ENCODE measurements at regions of chr1 and their contacts with region 1.

Region 1: DNA sequence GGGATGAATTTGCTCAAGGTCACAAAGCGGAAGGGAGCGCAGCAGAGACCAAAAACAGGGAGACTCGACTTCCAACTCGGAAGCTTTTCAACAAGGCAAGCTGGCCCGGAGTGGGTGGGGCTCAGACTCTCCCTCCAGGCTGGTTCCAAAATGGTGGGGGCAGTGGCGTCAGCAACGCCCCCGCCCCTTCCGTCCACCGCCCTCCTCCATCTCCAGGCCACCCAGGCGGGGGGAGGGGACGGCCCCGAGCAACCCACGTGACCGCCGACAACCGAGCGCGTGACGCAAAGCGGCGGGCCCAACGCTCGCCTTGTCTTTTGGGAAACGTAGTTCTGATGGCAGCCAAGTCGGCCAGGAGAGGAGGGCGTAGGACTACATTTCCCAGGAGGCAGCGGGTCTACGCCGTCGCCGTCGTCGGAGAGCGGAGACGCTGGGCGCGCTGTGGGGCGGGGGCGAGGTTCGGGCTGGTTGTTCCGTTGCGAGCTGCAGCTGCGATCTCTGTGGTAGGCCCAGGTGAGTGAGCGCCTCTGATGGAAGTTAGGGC is at the start of gene THRAP3:
- DNase-seq: peak; percentile 96 to 100 (median 100)
- ATAC-seq: peak; percentile 92
- H3K4me3 ChIP-seq: peak within 1 kb of the TSS; percentile 69
- H3K4me3 Mint-ChIP-seq: peak within 1 kb of the TSS; percentile 96 to 99 (median 98)
- H3K27ac ChIP-seq: peak within 1 kb of the TSS; percentile 98
- H3K27ac Mint-ChIP-seq: peak within 1 kb of the TSS; percentile 96 to 100 (median 100)
- H3K4me1 ChIP-seq: peaks cover 27 to 29% of the 10 kb centered on the region in 2 donors
- H3K4me1 Mint-ChIP-seq: peaks cover 21 to 43% (median 35%) of the 10 kb centered on the region in 7 donors
- H3K27me3 ChIP-seq: no peaks in the 10 kb centered on the region
- H3K27me3 Mint-ChIP-seq: no peaks in the 10 kb centered on the region
- total RNA-seq, gene THRAP3: 62.1 to 138 (median 122) TPM

Region 2: DNA sequence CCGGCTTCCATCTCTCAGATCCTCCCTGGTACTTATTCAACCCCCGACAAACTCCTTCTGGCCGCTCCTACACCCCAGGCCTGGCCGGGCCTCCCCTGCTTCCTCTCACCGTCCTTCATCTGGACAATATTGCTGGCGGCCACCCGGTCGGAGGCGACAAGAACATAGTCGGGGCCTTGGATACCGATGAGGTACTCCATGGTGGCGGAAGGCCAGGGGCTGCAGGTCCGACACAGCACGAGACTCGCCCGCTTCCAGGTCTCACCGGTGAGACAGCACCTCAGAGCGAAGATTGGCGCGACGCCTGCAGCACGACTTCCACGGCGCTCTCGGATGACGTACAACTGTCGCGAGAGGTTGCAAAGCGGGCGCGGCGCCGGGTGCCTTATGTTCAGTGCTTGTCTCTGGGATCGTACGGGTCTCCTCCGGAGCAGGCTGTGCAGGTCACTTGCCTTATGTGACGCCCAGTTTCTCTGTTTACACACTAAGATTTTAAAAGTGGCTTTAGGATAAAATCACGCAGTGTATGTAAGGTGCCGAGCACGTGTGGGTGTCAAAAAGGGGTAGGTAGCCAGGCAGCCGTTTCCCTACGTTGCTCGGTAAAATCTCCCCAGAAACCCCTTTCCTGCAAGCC is 582.7 kb before region 1 on chr1 and contains the start of gene PSMB2:
- CTCF ChIA-PET with region 1: no interaction called
- POLR2A ChIA-PET with region 1: no interaction called
- intact Hi-C with region 1: no loop called
- DNase-seq: peak; percentile 89 to 96 (median 95)
- ATAC-seq: peak; percentile 97
- H3K4me3 ChIP-seq: peak within 1 kb of the TSS; percentile 89
- H3K4me3 Mint-ChIP-seq: peak within 1 kb of the TSS; percentile 97 to 100 (median 100)
- H3K27ac ChIP-seq: peak within 1 kb of the TSS; percentile 92
- H3K27ac Mint-ChIP-seq: peak within 1 kb of the TSS; percentile 98 to 100 (median 99)
- H3K4me1 ChIP-seq: peaks cover 18 to 19% of the 10 kb centered on the region in 2 donors
- H3K4me1 Mint-ChIP-seq: peaks cover 16 to 54% (median 42%) of the 10 kb centered on the region in 7 donors
- H3K27me3 ChIP-seq: no peaks in the 10 kb centered on the region
- H3K27me3 Mint-ChIP-seq: peaks cover 12 to 44% (median 30%) of the 10 kb centered on the region in 5 donors
- total RNA-seq, gene PSMB2: 20.4 to 93.5 (median 23.5) TPM

Region 3: DNA sequence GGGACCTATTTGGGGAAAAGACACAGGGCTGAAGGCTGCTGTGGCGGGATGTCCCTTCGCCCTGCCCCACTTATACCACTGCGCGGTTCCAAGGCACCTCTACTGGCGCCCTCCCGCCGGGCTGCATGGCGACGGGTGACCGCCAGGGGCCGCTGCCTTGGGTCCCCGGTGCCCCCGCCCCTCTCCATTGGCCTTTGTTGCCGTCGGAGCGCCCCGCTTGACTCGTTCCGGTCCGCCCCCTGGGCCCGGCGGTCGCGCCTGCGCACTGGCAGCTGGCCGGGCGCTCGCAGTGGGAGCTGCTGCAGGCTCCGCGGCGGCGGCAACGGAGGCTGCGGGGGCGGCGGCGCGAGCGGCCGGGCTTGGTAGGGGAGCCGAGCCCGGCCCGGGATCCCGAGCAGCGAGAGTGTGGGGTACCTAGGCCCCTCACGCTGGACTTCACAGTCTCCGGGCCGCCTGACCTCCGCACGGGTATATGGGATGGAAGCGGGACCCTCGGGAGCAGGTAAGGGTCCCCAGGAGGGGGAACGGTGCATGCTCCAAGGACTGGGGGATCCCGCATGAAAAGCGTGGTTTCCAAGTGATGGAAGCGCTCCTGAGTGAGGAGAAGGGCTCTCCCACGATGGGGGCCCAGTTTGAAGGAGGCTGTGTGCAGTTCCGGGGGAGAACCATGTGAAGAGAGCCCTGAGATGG is 341.0 kb before region 1 on chr1 and contains the start of gene AGO1:
- CTCF ChIA-PET with region 1: no interaction called
- POLR2A ChIA-PET with region 1: interaction called, 3 read pairs
- intact Hi-C with region 1: loop called in 1 of 2 experiments (anchors 1 kb)
- DNase-seq: peak; percentile 94 to 99 (median 97)
- ATAC-seq: peak; percentile 100
- H3K4me3 ChIP-seq: peak within 1 kb of the TSS; percentile 100
- H3K4me3 Mint-ChIP-seq: peak within 1 kb of the TSS; percentile 90 to 98 (median 94)
- H3K27ac ChIP-seq: peak within 1 kb of the TSS; percentile 79
- H3K27ac Mint-ChIP-seq: peak within 1 kb of the TSS; percentile 72 to 92 (median 84)
- H3K4me1 ChIP-seq: peaks cover 9 to 24% of the 10 kb centered on the region in 2 donors
- H3K4me1 Mint-ChIP-seq: peaks cover 37 to 55% (median 51%) of the 10 kb centered on the region in 7 donors
- H3K27me3 ChIP-seq: no peaks in the 10 kb centered on the region
- H3K27me3 Mint-ChIP-seq: peaks cover 0 to 4% (median 0%) of the 10 kb centered on the region in 5 donors
- total RNA-seq, gene AGO1: 22.5 to 28.0 (median 26.9) TPM

Region 4: DNA sequence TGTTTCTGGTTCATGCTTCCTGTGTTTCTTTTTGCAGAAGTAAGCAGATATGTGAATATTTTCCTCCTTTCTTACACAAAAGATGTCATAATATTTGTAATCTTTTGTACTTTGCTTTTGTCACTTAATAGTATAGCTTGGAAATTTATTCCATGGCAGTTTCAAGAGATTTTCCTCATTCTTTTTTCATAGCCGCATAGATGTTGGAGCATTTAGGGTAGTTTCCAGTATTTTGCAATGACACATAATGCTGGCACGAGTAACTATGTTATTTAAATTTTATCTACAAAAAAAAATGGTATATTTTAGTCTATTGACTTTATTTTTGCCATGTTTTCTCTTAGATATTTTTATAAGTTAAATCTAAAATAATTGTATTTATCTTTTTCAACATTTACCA is 252.5 kb before region 1 on chr1:
- CTCF ChIA-PET with region 1: no interaction called
- POLR2A ChIA-PET with region 1: no interaction called
- intact Hi-C with region 1: no loop called
- DNase-seq: no peak
- ATAC-seq: no peak
- H3K4me3 ChIP-seq: no peak overlapping the region
- H3K4me3 Mint-ChIP-seq: no peak overlapping the region
- H3K27ac ChIP-seq: no peak overlapping the region
- H3K27ac Mint-ChIP-seq: peak overlapping the region in 1 of 9 donors; percentile 7
- H3K4me1 ChIP-seq: no peaks in the 10 kb centered on the region
- H3K4me1 Mint-ChIP-seq: peaks cover 0 to 11% (median 4%) of the 10 kb centered on the region in 7 donors
- H3K27me3 ChIP-seq: no peaks in the 10 kb centered on the region
- H3K27me3 Mint-ChIP-seq: no peaks in the 10 kb centered on the region

Region 5: DNA sequence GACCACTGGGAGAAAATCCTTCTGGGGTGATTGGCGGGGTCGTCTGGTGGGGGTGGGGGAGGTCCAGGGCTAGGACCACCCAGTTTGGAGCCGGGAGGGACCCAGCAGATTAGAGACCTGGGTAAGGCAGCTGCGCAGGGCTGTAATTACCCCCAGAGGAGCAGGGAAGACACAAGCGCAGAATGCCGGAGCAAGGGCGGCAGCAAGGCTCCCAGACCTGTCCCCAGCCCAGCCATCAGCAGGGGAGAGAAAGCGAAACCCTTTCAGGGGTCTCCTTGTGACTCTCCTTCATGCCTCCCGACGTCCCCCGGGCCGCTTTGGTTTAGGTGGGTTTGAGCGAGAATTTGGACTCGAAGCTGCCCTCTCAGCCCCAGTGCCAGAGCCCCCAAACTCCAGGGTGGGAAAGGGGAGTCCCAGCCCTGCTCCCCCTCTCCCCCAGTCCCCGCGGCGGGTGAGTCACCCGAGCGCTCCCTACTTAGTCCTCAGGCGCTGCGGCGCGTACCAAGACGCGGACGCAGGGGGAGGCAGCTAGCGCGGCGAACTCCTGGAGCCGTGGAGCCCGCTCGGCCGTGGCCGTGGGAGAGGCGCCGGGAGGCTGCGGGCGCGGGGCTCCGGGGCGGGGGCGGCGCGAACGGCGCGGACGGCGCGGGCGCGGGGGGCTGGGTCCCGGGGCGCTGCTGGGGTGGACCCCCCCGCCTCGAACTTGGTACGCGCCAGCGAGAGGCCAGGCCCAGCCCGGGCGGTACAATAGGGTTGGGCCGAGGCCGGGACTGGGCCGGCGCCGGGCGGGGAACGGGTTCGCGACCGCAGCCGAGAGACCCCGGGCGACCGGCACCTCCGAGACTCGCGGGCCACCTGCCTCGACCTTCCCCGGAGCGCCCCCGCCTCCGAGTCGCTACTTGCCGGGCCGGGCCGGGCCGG is 68.4 kb before region 1 on chr1 and contains the start of gene MAP7D1:
- CTCF ChIA-PET with region 1: interaction called, 4 read pairs
- POLR2A ChIA-PET with region 1: interaction called, 96 read pairs
- intact Hi-C with region 1: loop called (anchors 1 kb)
- DNase-seq: peak; percentile 80 to 90 (median 87)
- ATAC-seq: peak; percentile 89
- H3K4me3 ChIP-seq: peak within 1 kb of the TSS; percentile 97
- H3K4me3 Mint-ChIP-seq: peak within 1 kb of the TSS; percentile 85 to 95 (median 93)
- H3K27ac ChIP-seq: peak within 1 kb of the TSS; percentile 97
- H3K27ac Mint-ChIP-seq: peak within 1 kb of the TSS; percentile 90 to 99 (median 97)
- H3K4me1 ChIP-seq: peaks cover 58 to 66% of the 10 kb centered on the region in 2 donors
- H3K4me1 Mint-ChIP-seq: peaks cover 58 to 79% (median 71%) of the 10 kb centered on the region in 7 donors
- H3K27me3 ChIP-seq: no peaks in the 10 kb centered on the region
- H3K27me3 Mint-ChIP-seq: no peaks in the 10 kb centered on the region
- total RNA-seq, gene MAP7D1: 156 to 257 (median 235) TPM

Region 6: DNA sequence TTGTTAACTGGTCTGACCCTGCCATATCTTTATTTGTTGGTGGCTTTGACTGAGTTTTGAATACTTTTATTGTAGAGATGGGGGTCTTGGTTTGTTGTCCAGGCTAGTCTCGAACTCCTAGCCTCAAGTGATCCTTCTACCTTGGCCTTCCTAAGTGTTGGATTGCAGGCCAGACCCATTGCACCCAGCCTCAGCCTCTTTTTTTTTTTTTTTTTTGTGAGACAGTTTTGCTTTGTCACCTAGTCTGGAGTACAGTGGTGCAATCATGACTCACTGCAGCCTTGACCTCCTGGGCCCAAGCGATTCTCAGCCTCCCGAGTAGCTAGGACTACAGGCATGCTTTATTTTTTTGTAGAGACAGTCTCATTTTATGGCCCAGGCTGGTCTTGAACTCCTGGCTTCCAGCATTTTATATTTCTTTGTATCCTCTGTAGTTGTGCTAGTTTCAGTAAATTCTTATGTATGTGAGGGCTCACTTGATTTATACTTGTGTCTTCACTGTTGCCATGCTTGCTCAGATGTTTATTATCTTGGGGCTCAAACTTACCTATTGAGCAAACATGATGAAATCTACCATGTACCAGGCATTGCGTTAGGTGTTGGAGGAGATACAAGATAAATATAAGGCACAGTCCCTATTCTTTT is 24.3 kb after region 1 on chr1:
- CTCF ChIA-PET with region 1: interaction called, 5 read pairs
- POLR2A ChIA-PET with region 1: interaction called, 11 read pairs
- intact Hi-C with region 1: no loop called
- DNase-seq: no peak
- ATAC-seq: peak; percentile 71
- H3K4me3 ChIP-seq: no peak overlapping the region
- H3K4me3 Mint-ChIP-seq: peak overlapping the region in 4 of 10 donors; percentile 1 to 51 (median 2)
- H3K27ac ChIP-seq: no peak overlapping the region
- H3K27ac Mint-ChIP-seq: peak overlapping the region in 3 of 9 donors; percentile 46 to 59 (median 58)
- H3K4me1 ChIP-seq: peaks cover 10 to 11% of the 10 kb centered on the region in 2 donors
- H3K4me1 Mint-ChIP-seq: peaks cover 36 to 70% (median 49%) of the 10 kb centered on the region in 7 donors
- H3K27me3 ChIP-seq: no peaks in the 10 kb centered on the region
- H3K27me3 Mint-ChIP-seq: no peaks in the 10 kb centered on the region

Region 7: GRCh38 chr1:36385410-36386257 is 161.6 kb after region 1 on chr1 and contains the start of gene STK40:
- CTCF ChIA-PET with region 1: no interaction called
- POLR2A ChIA-PET with region 1: interaction called, 4 read pairs
- intact Hi-C with region 1: loop called (anchors 1 kb)
- DNase-seq: peak; percentile 83 to 99 (median 96)
- ATAC-seq: peak; percentile 92
- H3K4me3 ChIP-seq: peak within 1 kb of the TSS; percentile 96
- H3K4me3 Mint-ChIP-seq: peak within 1 kb of the TSS; percentile 85 to 95 (median 93)
- H3K27ac ChIP-seq: peak within 1 kb of the TSS; percentile 97
- H3K27ac Mint-ChIP-seq: peak within 1 kb of the TSS; percentile 95 to 99 (median 97)
- H3K4me1 ChIP-seq: peaks cover 26 to 29% of the 10 kb centered on the region in 2 donors
- H3K4me1 Mint-ChIP-seq: peaks cover 52 to 67% (median 57%) of the 10 kb centered on the region in 7 donors
- H3K27me3 ChIP-seq: no peaks in the 10 kb centered on the region
- H3K27me3 Mint-ChIP-seq: no peaks in the 10 kb centered on the region
- total RNA-seq, gene STK40: 27.6 to 56.8 (median 48.2) TPM

Region 8: DNA sequence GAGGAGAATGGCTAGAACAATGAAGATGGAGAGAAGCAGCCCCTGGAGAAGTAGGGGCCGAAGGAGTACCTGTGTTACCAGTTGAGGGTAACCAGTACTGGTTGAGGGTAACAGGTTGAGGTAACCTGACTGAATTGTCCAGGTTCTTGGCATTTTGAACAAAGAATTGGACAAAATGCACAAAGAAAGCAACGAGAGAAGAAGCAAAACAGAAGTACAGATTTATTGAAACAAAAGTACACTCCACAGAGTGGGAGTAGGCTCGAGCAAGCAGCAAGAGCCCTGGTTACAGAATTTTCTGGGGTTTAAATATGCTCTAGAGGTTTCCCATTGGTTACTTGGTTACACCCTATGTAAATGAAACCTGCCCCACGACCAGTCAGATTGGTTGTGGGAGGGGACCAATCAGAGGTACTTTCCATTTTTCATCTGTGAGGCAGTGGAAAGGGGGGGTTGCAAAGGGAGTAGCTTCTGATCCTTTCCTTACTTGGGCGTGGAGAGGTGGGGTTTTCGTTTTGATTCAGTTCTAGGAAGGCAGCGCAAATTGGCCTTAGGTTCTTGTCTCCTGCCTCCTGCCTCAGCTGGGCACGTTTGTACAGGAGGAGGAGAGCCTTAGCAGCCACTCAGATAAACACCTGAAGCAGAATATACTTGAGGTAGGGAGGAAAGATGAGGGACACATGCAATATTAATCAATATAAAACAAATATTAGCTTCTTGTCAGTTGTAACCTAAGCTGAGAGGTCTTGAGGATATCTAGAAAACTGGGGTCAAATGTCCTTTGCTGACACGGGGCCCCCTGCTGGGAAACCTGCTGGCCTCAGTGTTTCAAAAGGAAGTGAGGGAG is 187.8 kb after region 1 on chr1:
- CTCF ChIA-PET with region 1: no interaction called
- POLR2A ChIA-PET with region 1: no interaction called
- intact Hi-C with region 1: no loop called
- DNase-seq: peak in 8 of 9 donors; percentile 14 to 71 (median 40)
- ATAC-seq: peak; percentile 77
- H3K4me3 ChIP-seq: no peak overlapping the region
- H3K4me3 Mint-ChIP-seq: peak overlapping the region in 7 of 10 donors; percentile 5 to 49 (median 40)
- H3K27ac ChIP-seq: no peak overlapping the region
- H3K27ac Mint-ChIP-seq: peak overlapping the region; percentile 22 to 93 (median 84)
- H3K4me1 ChIP-seq: peaks cover 0 to 4% of the 10 kb centered on the region in 2 donors
- H3K4me1 Mint-ChIP-seq: peaks cover 0 to 19% (median 15%) of the 10 kb centered on the region in 7 donors
- H3K27me3 ChIP-seq: no peaks in the 10 kb centered on the region
- H3K27me3 Mint-ChIP-seq: no peaks in the 10 kb centered on the region

Region 9: DNA sequence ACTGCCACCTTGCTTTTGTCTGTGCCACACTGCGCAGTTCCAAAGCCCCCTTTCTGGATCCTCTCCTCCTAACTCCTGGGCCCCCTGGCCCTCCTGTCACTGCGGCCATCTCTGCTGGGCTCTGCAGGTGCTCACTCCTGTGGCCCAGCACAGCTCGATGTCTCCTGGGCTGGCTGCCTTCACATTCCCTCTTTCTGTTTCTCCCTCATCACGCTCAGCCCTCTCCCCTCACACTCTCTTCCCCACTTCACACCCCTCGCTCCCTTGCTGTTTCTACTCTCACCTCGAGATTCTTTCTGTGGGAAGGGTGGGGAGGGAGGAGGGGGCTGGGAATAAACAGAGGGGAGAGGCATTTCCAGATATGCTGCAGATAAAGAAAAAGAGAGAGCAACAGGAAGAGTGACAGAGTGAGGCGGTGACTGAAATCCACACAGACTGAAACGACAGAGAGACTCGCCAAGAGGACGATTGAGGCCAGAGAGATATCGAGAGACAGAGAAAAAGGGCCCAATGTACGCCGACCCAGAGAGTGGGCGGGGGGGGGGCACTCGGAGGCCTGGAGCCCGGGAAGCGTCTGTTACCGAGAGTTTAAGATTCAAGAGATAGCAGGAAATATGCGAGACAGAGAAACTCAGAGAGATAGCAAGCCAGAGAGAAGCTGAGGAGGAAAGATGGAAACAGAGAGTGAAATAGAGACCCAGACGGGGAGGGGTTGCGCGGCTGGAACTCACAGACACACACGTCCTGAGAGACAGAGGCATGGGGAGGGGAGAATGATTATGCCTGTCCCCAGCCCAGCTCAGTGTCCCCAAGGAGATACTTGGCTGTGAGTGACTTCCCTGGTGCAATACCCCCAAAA is 257.9 kb after region 1 on chr1:
- CTCF ChIA-PET with region 1: no interaction called
- POLR2A ChIA-PET with region 1: no interaction called
- intact Hi-C with region 1: no loop called
- DNase-seq: peak in 1 of 9 donors; percentile 7
- ATAC-seq: no peak
- H3K4me3 ChIP-seq: no peak overlapping the region
- H3K4me3 Mint-ChIP-seq: peak overlapping the region; percentile 67 to 86 (median 80)
- H3K27ac ChIP-seq: no peak overlapping the region
- H3K27ac Mint-ChIP-seq: peak overlapping the region in 8 of 9 donors; percentile 66 to 97 (median 77)
- H3K4me1 ChIP-seq: peaks cover 0 to 4% of the 10 kb centered on the region in 2 donors
- H3K4me1 Mint-ChIP-seq: peaks cover 10 to 17% (median 14%) of the 10 kb centered on the region in 7 donors
- H3K27me3 ChIP-seq: no peaks in the 10 kb centered on the region
- H3K27me3 Mint-ChIP-seq: peaks cover 0 to 9% (median 0%) of the 10 kb centered on the region in 5 donors

Region 10: GRCh38 chr1:37692078-37692833 is 1468.2 kb after region 1 on chr1 and contains the start of gene CDCA8:
- CTCF ChIA-PET with region 1: no interaction called
- POLR2A ChIA-PET with region 1: no interaction called
- intact Hi-C with region 1: loop called in 1 of 2 experiments (anchors 10 kb)
- DNase-seq: peak; percentile 92 to 99 (median 97)
- ATAC-seq: peak; percentile 94
- H3K4me3 ChIP-seq: peak within 1 kb of the TSS; percentile 61
- H3K4me3 Mint-ChIP-seq: peak within 1 kb of the TSS; percentile 88 to 98 (median 96)
- H3K27ac ChIP-seq: peak within 1 kb of the TSS; percentile 77
- H3K27ac Mint-ChIP-seq: peak within 1 kb of the TSS; percentile 81 to 95 (median 88)
- H3K4me1 ChIP-seq: peaks cover 11 to 23% of the 10 kb centered on the region in 2 donors
- H3K4me1 Mint-ChIP-seq: peaks cover 23 to 54% (median 39%) of the 10 kb centered on the region in 7 donors
- H3K27me3 ChIP-seq: no peaks in the 10 kb centered on the region
- H3K27me3 Mint-ChIP-seq: peaks cover 0 to 3% (median 0%) of the 10 kb centered on the region in 5 donors
- total RNA-seq, gene CDCA8: 0.58 to 45.5 (median 0.92) TPM

Measured in naive thymus-derived CD4-positive, alpha-beta T cell (primary cell).